Activated B cell treated with CpG ODN at 0.5 μM for 24 hours (primary cell): ENCODE measurements at regions of chr22 and their contacts with region 1.

Region 1: GRCh38 chr22:39462443-39463221 is 5.8 kb downstream of the MGAT3 start:
- DNase-seq: no peak
- ATAC-seq: peak; percentile 11
- H3K4me3 Mint-ChIP-seq: peak overlapping the region; percentile 32
- H3K27ac Mint-ChIP-seq: peak overlapping the region; percentile 70
- H3K4me1 Mint-ChIP-seq: peaks cover 86% of the 10 kb centered on the region
- H3K27me3 Mint-ChIP-seq: peaks cover 3% of the 10 kb centered on the region
- CTCF ChIP-seq: no peak

Region 2: GRCh38 chr22:39439170-39439569 is 23.5 kb before region 1 on chr22:
- CTCF ChIA-PET with region 1: interaction called, 4 read pairs
- POLR2A ChIA-PET with region 1: interaction called, 38 read pairs
- intact Hi-C with region 1: loop called (anchors 1 kb)
- DNase-seq: no peak
- ATAC-seq: no peak
- H3K4me3 Mint-ChIP-seq: peak overlapping the region; percentile 22
- H3K27ac Mint-ChIP-seq: no peak overlapping the region
- H3K4me1 Mint-ChIP-seq: peaks cover 56% of the 10 kb centered on the region
- H3K27me3 Mint-ChIP-seq: no peaks in the 10 kb centered on the region
- CTCF ChIP-seq: no peak

Region 3: GRCh38 chr22:39661842-39662676 is 199.4 kb after region 1 on chr22:
- CTCF ChIA-PET with region 1: no interaction called
- POLR2A ChIA-PET with region 1: no interaction called
- intact Hi-C with region 1: no loop called
- DNase-seq: peak; percentile 41
- ATAC-seq: peak; percentile 53
- H3K4me3 Mint-ChIP-seq: peak overlapping the region; percentile 75
- H3K27ac Mint-ChIP-seq: no peak overlapping the region
- H3K4me1 Mint-ChIP-seq: peaks cover 18% of the 10 kb centered on the region
- H3K27me3 Mint-ChIP-seq: peaks cover 57% of the 10 kb centered on the region
- CTCF ChIP-seq: no peak

Region 4: DNA sequence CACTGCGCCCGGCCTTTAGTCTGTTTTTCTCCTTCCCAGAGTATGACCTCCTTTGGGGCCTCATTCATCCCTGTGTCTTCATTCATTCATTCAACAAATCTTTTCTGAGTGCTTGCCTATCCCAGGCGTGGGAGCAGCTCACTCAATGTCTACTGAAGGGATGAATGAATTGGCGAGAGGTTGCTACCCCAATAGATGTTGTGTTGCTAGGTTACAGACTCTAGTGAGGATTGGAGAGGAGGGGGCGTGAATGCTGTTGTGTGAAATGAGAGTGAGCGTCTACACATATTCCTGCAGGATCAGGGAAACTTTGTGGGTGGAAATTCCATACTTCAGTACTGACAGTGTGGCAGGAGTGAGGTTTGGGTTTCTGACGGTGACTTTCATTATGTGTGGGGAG is 1574.3 kb after region 1 on chr22:
- CTCF ChIA-PET with region 1: no interaction called
- POLR2A ChIA-PET with region 1: interaction called, 10 read pairs
- intact Hi-C with region 1: no loop called
- DNase-seq: no peak
- ATAC-seq: no peak
- H3K4me3 Mint-ChIP-seq: no peak overlapping the region
- H3K27ac Mint-ChIP-seq: no peak overlapping the region
- H3K4me1 Mint-ChIP-seq: no peaks in the 10 kb centered on the region
- H3K27me3 Mint-ChIP-seq: peaks cover 2% of the 10 kb centered on the region
- CTCF ChIP-seq: no peak